MCF 10A (cell line): ENCODE measurements at regions of chr1 and their contacts with region 1.

Region 1: DNA sequence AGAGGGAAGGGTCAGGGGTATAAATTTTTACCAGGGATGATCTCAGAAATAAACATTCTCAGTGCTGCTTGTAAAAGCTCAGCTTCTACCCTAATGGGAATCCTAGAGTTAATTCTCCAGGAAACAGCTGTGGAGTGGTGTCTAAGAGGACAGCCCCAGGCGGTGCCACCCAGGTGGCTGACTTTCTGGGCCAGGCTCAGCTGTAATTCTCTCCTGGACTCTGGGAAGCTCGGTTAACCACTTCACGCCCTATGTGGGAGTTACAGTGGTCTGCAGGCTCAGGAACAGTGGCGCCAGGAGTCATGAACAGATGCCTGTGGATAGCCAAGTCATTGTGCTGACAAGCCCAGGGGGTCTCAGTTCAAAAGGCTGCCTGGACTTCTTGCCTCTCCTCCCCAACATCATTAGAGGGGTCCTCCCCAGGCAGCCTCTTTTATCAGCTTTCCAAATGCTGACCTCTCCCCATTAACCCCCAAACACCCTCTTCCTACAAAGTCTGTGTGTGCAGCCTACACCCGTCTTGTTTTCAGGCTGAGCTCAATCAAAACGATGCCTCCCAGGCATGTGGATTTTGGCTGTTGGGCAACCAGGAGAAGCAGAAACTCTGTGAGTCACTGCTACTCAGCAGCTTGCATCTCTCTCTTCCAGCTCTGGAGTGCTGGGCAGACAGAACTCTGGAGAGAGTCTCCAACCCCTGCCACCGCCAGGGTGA is 1.2 kb downstream of the HHIPL2 start:
- DNase-seq: peak; percentile 98
- H3K4me3 Mint-ChIP-seq: peak overlapping the region; percentile 46
- H3K27ac Mint-ChIP-seq: peak overlapping the region; percentile 5
- H3K4me1 Mint-ChIP-seq: peaks cover 26% of the 10 kb centered on the region
- H3K27me3 Mint-ChIP-seq: no peaks in the 10 kb centered on the region
- CTCF ChIP-seq: no peak

Region 2: GRCh38 chr1:222373216-222373615 is 173.5 kb before region 1 on chr1:
- CTCF ChIA-PET with region 1: no interaction called
- POLR2A ChIA-PET with region 1: no interaction called
- intact Hi-C with region 1: no loop called
- DNase-seq: no peak
- H3K4me3 Mint-ChIP-seq: no peak overlapping the region
- H3K27ac Mint-ChIP-seq: no peak overlapping the region
- H3K4me1 Mint-ChIP-seq: peaks cover 20% of the 10 kb centered on the region
- H3K27me3 Mint-ChIP-seq: no peaks in the 10 kb centered on the region
- CTCF ChIP-seq: no peak

Region 3: DNA sequence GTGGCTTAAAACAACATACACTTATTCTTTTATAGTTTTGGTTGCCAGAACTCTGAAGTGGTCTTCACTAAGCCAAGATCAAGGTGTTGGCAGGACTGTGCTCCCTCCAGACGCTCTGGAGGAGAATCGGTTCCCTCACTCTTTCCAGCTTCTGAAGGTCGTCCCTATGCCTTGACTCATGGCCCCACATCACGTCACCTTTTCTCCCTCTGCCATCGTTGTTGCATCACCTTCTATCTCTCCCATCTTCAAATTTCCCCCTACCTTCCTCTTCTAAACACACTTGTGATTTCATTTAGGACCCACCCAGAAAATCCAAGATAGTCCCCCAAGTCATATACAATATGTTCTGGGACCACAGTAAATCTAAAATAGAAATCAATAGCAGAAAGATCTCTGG is 11.2 kb before region 1 on chr1:
- CTCF ChIA-PET with region 1: interaction called, 5 read pairs
- POLR2A ChIA-PET with region 1: interaction called, 19 read pairs
- intact Hi-C with region 1: no loop called
- DNase-seq: no peak
- H3K4me3 Mint-ChIP-seq: no peak overlapping the region
- H3K27ac Mint-ChIP-seq: no peak overlapping the region
- H3K4me1 Mint-ChIP-seq: no peaks in the 10 kb centered on the region
- H3K27me3 Mint-ChIP-seq: no peaks in the 10 kb centered on the region
- CTCF ChIP-seq: no peak

Region 4: GRCh38 chr1:222557148-222557547 is 10.4 kb after region 1 on chr1:
- CTCF ChIA-PET with region 1: interaction called, 13 read pairs
- POLR2A ChIA-PET with region 1: interaction called, 15 read pairs
- intact Hi-C with region 1: no loop called
- DNase-seq: peak; percentile 32
- H3K4me3 Mint-ChIP-seq: no peak overlapping the region
- H3K27ac Mint-ChIP-seq: no peak overlapping the region
- H3K4me1 Mint-ChIP-seq: no peaks in the 10 kb centered on the region
- H3K27me3 Mint-ChIP-seq: no peaks in the 10 kb centered on the region
- CTCF ChIP-seq: no peak

Region 5: GRCh38 chr1:222582099-222582774 is 35.5 kb after region 1 on chr1:
- CTCF ChIA-PET with region 1: interaction called, 5 read pairs
- POLR2A ChIA-PET with region 1: interaction called, 10 read pairs
- intact Hi-C with region 1: no loop called
- DNase-seq: peak; percentile 47
- H3K4me3 Mint-ChIP-seq: no peak overlapping the region
- H3K27ac Mint-ChIP-seq: peak overlapping the region; percentile 82
- H3K4me1 Mint-ChIP-seq: peaks cover 41% of the 10 kb centered on the region
- H3K27me3 Mint-ChIP-seq: no peaks in the 10 kb centered on the region
- CTCF ChIP-seq: no peak

Region 6: GRCh38 chr1:222634180-222635013 is 87.7 kb after region 1 on chr1:
- CTCF ChIA-PET with region 1: interaction called, 25 read pairs
- POLR2A ChIA-PET with region 1: interaction called, 11 read pairs
- intact Hi-C with region 1: loop called (anchors 5 kb)
- DNase-seq: peak; percentile 97
- H3K4me3 Mint-ChIP-seq: no peak overlapping the region
- H3K27ac Mint-ChIP-seq: peak overlapping the region; percentile 55
- H3K4me1 Mint-ChIP-seq: peaks cover 6% of the 10 kb centered on the region
- H3K27me3 Mint-ChIP-seq: no peaks in the 10 kb centered on the region
- CTCF ChIP-seq: peak; percentile 97

Region 7: DNA sequence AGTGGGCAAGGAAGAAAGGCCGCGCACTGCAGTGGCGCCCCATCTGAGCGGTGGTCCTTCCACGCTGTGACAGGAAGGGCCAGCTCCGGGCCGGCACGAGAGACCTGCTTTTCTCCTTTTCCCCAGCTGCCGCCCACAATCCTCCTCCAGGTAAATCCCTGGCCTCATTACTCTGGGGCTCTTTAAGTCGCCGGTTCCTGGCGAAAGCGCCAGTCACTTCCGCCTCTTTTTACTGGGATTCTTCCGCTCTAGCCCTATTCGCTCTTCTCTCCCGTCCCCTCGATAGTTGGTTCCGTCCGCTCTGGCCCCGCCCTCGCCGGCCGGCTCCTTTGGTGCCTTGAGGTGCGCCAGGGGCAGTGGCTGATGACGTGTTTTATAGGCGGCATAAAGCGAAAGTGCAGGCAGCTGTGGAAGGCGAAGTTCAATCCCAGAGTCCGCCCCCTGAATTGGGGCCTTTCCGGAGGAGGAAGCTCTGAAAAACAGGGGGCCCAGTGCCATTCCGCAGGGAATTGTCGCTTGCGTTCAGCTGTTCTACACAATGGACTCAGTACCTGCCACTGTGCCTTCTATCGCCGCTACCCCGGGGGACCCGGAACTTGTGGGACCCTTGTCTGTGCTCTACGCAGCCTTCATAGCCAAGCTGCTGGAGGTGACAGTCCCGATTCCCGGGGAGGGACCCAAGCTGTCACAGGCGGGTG is 97.4 kb after region 1 on chr1:
- CTCF ChIA-PET with region 1: interaction called, 3 read pairs
- POLR2A ChIA-PET with region 1: interaction called, 15 read pairs
- intact Hi-C with region 1: no loop called
- DNase-seq: peak; percentile 100
- H3K4me3 Mint-ChIP-seq: peak overlapping the region; percentile 85
- H3K27ac Mint-ChIP-seq: peak overlapping the region; percentile 97
- H3K4me1 Mint-ChIP-seq: peaks cover 10% of the 10 kb centered on the region
- H3K27me3 Mint-ChIP-seq: no peaks in the 10 kb centered on the region
- CTCF ChIP-seq: no peak

Region 8: DNA sequence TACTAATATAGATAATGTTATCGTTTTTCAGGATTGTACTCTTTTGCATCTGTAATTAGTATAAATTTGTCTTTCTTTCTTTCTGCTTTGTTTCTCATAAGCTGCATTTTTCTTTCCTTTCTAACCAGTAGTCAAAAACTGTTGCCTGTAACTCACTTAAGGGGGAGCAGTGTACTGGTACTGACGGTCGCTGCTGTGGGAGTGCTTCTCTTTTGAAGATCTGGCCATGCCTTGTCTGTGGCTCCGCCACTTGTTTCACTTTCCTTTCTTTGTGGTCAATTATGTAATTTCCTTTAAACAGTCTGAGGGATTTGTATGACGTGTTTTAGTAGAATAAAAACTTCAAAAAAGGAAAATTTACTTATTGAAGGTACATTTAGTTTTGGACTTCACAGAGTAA is 108.1 kb after region 1 on chr1:
- CTCF ChIA-PET with region 1: no interaction called
- POLR2A ChIA-PET with region 1: no interaction called
- intact Hi-C with region 1: no loop called
- DNase-seq: no peak
- H3K4me3 Mint-ChIP-seq: no peak overlapping the region
- H3K27ac Mint-ChIP-seq: peak overlapping the region; percentile 1
- H3K4me1 Mint-ChIP-seq: no peaks in the 10 kb centered on the region
- H3K27me3 Mint-ChIP-seq: no peaks in the 10 kb centered on the region
- CTCF ChIP-seq: no peak

Region 9: GRCh38 chr1:222736972-222737371 is 190.3 kb after region 1 on chr1 and contains the start of gene FAM177B:
- CTCF ChIA-PET with region 1: no interaction called
- POLR2A ChIA-PET with region 1: no interaction called
- intact Hi-C with region 1: no loop called
- DNase-seq: peak; percentile 21
- H3K4me3 Mint-ChIP-seq: no peak within 1 kb of the TSS
- H3K27ac Mint-ChIP-seq: no peak within 1 kb of the TSS
- H3K4me1 Mint-ChIP-seq: no peaks in the 10 kb centered on the region
- H3K27me3 Mint-ChIP-seq: no peaks in the 10 kb centered on the region
- CTCF ChIP-seq: no peak
- total RNA-seq, gene FAM177B: 0.74 TPM in 1 of 2 replicates, not detected in the other

Region 10: DNA sequence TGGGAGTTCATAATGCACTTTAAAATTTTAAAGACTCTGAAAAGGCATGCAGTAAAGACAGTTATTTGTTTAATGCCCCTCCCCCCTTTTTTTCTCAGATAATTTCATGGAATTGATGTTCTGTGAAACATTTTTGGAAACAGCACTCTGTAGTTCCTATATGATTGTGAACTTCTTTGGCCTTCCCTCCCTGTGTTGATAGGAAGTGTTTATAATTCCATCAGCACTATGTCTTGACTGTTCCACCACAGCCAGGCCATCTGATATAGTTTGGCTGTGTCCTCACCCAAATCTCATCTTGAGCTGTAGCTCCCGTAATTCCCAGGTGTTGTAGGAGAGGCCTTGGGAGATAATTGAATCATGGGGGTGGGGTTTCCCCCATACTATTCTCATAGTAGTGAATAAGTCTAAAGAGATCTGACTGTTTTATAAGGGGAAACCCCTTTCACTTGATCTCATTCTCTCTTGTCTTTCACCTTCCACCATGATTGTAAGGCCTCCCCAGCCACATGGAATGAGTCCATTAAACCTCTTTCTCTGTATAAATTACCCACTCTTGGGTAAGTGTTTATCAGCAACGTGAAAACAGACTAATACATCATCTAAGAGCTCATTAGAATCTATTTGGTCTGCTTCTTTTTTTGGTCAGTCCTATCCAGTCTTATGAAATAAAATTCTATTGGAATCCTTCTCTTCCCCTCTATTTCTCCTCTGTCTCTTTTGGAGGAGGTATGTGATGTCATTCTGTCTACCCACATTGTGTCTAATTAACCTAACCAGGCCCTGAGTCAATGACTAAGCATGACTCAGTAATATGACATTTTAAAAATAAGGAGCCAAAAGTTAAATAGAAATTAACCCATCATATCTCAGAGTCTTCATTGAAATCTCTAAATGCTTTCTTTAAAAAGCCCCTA is 855.4 kb after region 1 on chr1:
- CTCF ChIA-PET with region 1: no interaction called
- POLR2A ChIA-PET with region 1: no interaction called
- intact Hi-C with region 1: no loop called
- DNase-seq: peak; percentile 90
- H3K4me3 Mint-ChIP-seq: no peak overlapping the region
- H3K27ac Mint-ChIP-seq: peak overlapping the region; percentile 2
- H3K4me1 Mint-ChIP-seq: peaks cover 24% of the 10 kb centered on the region
- H3K27me3 Mint-ChIP-seq: no peaks in the 10 kb centered on the region
- CTCF ChIP-seq: no peak